ENCODE measurements at regions of chr6 and their contacts with region 1.

Region 1: DNA sequence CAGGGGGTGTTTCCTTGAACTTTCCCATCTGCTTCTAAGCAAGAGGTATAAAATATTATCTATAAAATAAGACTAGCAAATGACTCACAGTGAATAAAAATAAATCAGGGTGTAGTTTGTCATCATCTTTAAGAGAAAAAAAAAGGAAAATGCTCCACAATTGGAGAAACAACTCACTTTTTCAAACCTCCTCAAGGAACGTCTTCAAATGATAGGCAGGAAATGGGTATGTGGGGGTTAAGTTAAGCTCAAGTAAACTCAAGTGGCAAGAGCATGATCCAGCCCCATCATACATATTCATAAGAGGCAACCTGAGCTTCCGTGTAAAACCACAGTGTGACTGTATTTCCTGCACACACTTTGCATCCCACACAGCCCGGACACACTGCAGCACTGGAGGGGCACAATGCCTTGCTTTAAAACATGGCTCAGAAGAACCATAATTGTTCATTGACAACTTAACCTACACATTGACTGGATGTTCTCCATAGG is 58.5 kb upstream of the CEP85L start:
- DNase-seq: peak; percentile 41 to 94 (median 61)
- ATAC-seq: peak; percentile 90
- H3K4me3 ChIP-seq: peak overlapping the region; percentile 83
- H3K4me3 Mint-ChIP-seq: peak overlapping the region; percentile 98
- H3K27ac ChIP-seq: peak overlapping the region; percentile 73 to 78
- H3K27ac Mint-ChIP-seq: peak overlapping the region; percentile 97
- H3K4me1 ChIP-seq: peaks cover 53% of the 10 kb centered on the region
- H3K4me1 Mint-ChIP-seq: peaks cover 82% of the 10 kb centered on the region
- H3K27me3 ChIP-seq: no peaks in the 10 kb centered on the region
- H3K27me3 Mint-ChIP-seq: no peaks in the 10 kb centered on the region
- CTCF ChIP-seq: no peak

Region 2: DNA sequence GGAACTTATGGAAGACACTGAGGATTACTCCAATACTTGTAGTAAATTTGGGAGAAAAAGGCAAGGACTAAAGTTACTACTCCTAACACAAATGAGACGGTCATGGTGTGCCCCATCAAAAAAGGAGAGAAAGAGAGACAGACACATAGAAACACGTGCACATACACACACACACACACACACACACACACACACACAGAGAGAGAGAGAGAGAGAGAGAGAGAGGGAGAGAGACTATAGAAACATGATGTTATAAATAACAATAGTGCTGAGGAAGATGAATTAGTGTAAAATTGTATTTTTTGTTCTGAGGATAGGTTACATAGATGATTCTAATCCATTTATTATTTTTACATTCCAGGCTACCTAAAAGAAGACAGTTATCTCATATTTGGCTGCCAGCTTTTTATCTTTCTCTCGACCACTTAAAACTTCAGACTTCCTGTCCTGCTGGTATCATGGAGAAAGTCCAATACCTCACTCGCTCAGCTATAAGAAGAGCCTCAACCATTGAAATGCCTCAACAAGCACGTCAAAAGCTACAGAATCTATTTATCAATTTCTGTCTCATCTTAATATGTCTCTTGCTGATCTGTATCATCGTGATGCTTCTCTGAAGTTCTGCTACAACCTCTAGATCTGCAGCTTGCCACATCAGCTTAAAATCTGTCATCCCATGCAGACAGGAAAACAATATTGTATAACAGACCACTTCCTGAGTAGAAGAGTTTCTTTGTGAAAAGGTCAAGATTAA is 151.3 kb before region 1 on chr6:
- CTCF ChIA-PET with region 1: no interaction called
- POLR2A ChIA-PET with region 1: interaction called, 20 read pairs
- intact Hi-C with region 1: no loop called
- DNase-seq: peak in 7 of 14 experiments; percentile 6 to 86 (median 53)
- ATAC-seq: peak; percentile 93
- H3K4me3 ChIP-seq: peak overlapping the region; percentile 25
- H3K4me3 Mint-ChIP-seq: peak overlapping the region; percentile 74
- H3K27ac ChIP-seq: peak overlapping the region; percentile 59 to 78
- H3K27ac Mint-ChIP-seq: peak overlapping the region; percentile 89
- H3K4me1 ChIP-seq: peaks cover 13% of the 10 kb centered on the region
- H3K4me1 Mint-ChIP-seq: peaks cover 43% of the 10 kb centered on the region
- H3K27me3 ChIP-seq: no peaks in the 10 kb centered on the region
- H3K27me3 Mint-ChIP-seq: no peaks in the 10 kb centered on the region
- CTCF ChIP-seq: no peak

Region 3: GRCh38 chr6:118651282-118652050 is 58.4 kb before region 1 on chr6 and contains the start of gene CEP85L:
- CTCF ChIA-PET with region 1: interaction called, 7 read pairs
- POLR2A ChIA-PET with region 1: interaction called, 64 read pairs
- intact Hi-C with region 1: loop called (anchors 1 to 2 kb)
- DNase-seq: peak; percentile 83 to 96 (median 90)
- ATAC-seq: peak; percentile 90
- H3K4me3 ChIP-seq: peak within 1 kb of the TSS; percentile 82
- H3K4me3 Mint-ChIP-seq: peak within 1 kb of the TSS; percentile 91
- H3K27ac ChIP-seq: peak within 1 kb of the TSS; percentile 78 to 87
- H3K27ac Mint-ChIP-seq: peak within 1 kb of the TSS; percentile 91
- H3K4me1 ChIP-seq: peaks cover 35% of the 10 kb centered on the region
- H3K4me1 Mint-ChIP-seq: peaks cover 59% of the 10 kb centered on the region
- H3K27me3 ChIP-seq: no peaks in the 10 kb centered on the region
- H3K27me3 Mint-ChIP-seq: no peaks in the 10 kb centered on the region
- CTCF ChIP-seq: no peak
- total RNA-seq, gene CEP85L: 76.2 to 80.7 TPM

Region 4: DNA sequence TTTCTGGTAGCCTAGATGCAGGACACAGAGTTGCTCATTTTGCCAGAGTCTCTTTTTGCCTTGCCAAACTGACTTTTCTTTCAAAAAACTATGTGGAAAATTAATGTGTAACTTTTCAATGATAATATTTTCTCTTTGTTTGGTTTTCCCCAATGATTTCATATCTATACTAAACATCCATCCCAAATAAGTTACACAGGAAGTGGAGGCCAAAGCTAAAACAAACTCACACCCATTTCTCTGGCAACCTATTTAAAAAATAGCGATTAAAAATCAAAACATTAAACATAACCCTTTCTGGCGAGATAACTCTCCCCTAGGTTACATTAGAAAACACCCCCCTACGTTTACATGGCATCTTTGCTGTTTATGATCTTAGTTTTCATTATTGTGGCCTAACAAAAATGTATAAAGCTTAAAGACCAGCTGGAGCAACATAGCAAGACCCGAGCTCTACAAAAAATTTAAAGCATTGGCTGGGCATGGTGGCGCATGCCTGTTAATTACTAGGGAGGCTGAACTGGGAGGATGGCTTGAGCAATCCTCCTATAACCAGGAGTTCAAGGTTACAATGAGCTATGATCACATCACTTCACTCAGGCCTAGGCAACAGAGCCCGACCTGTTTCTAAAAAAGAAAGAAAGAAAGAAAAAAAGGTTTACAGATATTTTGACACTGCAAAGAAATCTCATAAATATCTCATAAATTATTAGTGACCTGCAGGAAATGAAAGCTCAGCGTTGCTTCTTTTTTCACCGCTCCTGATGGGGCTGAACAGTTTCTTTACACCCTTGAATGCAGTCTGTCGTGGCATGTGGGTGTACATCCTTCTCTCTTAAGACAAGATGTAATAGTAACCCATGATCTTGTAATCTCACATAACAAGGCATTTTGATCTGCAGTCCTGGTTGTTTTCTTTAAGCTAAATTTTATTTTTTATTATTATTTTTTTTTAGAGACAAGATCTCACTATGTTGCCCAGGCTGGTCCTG is 25.7 kb before region 1 on chr6:
- CTCF ChIA-PET with region 1: no interaction called
- POLR2A ChIA-PET with region 1: interaction called, 24 read pairs
- intact Hi-C with region 1: no loop called
- DNase-seq: no peak
- ATAC-seq: peak; percentile 29
- H3K4me3 ChIP-seq: no peak overlapping the region
- H3K4me3 Mint-ChIP-seq: peak overlapping the region; percentile 25
- H3K27ac ChIP-seq: no peak overlapping the region
- H3K27ac Mint-ChIP-seq: peak overlapping the region; percentile 60
- H3K4me1 ChIP-seq: peaks cover 28% of the 10 kb centered on the region
- H3K4me1 Mint-ChIP-seq: peaks cover 79% of the 10 kb centered on the region
- H3K27me3 ChIP-seq: no peaks in the 10 kb centered on the region
- H3K27me3 Mint-ChIP-seq: no peaks in the 10 kb centered on the region
- CTCF ChIP-seq: no peak

Region 5: GRCh38 chr6:118744261-118744941 is 34.5 kb after region 1 on chr6:
- CTCF ChIA-PET with region 1: no interaction called
- POLR2A ChIA-PET with region 1: interaction called, 5 read pairs
- intact Hi-C with region 1: loop called in 1 of 2 experiments (anchors 5 kb)
- DNase-seq: no peak
- ATAC-seq: no peak
- H3K4me3 ChIP-seq: no peak overlapping the region
- H3K4me3 Mint-ChIP-seq: no peak overlapping the region
- H3K27ac ChIP-seq: no peak overlapping the region
- H3K27ac Mint-ChIP-seq: no peak overlapping the region
- H3K4me1 ChIP-seq: peaks cover 10% of the 10 kb centered on the region
- H3K4me1 Mint-ChIP-seq: peaks cover 23% of the 10 kb centered on the region
- H3K27me3 ChIP-seq: no peaks in the 10 kb centered on the region
- H3K27me3 Mint-ChIP-seq: no peaks in the 10 kb centered on the region
- CTCF ChIP-seq: no peak

Region 6: DNA sequence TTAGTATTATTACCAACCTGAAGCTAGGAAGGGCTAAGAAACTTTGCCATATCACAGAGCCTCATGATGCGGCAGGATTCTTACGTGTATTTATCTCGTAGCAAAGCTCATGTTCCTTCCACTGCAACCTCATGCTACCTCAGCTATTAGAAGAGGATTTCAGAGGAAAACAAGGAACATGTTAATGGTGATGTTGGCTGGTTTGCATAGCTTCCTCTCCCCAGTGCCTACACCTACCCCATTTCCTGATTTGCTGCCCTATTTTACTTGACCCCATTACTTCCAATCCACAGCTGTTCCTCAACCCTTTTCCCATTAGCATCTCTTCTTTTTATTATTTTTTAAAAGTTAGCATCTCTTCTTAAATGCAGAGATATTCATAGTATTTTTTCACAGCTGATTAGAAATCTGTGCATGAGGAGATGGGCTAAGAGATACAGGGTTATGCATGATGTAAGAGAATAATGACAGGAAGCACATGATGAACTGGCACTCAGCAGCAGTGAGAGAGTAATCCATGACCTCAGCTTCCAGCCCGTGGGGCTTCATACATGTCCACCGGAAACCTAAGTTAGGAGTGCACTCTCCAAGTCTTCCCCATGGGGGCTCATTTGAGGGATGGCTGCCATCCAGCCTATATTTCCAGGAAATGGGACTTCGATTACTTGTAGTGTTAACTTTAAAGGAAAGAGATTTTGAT is 78.0 kb after region 1 on chr6:
- CTCF ChIA-PET with region 1: no interaction called
- POLR2A ChIA-PET with region 1: interaction called, 14 read pairs
- intact Hi-C with region 1: no loop called
- DNase-seq: peak in 5 of 14 experiments; percentile 10 to 74 (median 54)
- ATAC-seq: peak; percentile 92
- H3K4me3 ChIP-seq: no peak overlapping the region
- H3K4me3 Mint-ChIP-seq: peak overlapping the region; percentile 5
- H3K27ac ChIP-seq: peak overlapping the region in 1 of 2 donors; percentile 31
- H3K27ac Mint-ChIP-seq: peak overlapping the region; percentile 79
- H3K4me1 ChIP-seq: peaks cover 24% of the 10 kb centered on the region
- H3K4me1 Mint-ChIP-seq: peaks cover 16% of the 10 kb centered on the region
- H3K27me3 ChIP-seq: no peaks in the 10 kb centered on the region
- H3K27me3 Mint-ChIP-seq: no peaks in the 10 kb centered on the region
- CTCF ChIP-seq: no peak

Region 7: DNA sequence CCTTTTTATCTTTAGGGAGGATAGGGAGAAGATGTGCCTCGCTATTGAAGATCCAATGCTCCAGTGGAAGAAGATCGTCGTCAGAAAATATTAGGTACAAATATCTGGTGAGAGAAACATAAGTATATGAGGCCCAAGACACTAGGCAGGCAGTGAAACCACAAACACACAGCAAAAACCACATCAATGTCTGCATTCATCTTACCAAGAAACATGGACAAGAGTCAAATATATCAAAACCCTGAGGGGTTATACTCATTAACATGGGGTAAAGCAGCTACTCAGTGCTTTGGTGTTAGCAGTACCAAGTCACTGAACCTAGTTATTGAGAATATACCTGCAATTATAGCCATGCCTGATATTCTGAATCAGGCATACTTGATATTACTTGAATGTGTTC is 469.9 kb after region 1 on chr6:
- CTCF ChIA-PET with region 1: no interaction called
- POLR2A ChIA-PET with region 1: no interaction called
- intact Hi-C with region 1: no loop called
- DNase-seq: peak in 3 of 14 experiments; percentile 12 to 21 (median 15)
- ATAC-seq: no peak
- H3K4me3 ChIP-seq: no peak overlapping the region
- H3K4me3 Mint-ChIP-seq: no peak overlapping the region
- H3K27ac ChIP-seq: no peak overlapping the region
- H3K27ac Mint-ChIP-seq: no peak overlapping the region
- H3K4me1 ChIP-seq: peaks cover 6% of the 10 kb centered on the region
- H3K4me1 Mint-ChIP-seq: peaks cover 21% of the 10 kb centered on the region
- H3K27me3 ChIP-seq: no peaks in the 10 kb centered on the region
- H3K27me3 Mint-ChIP-seq: no peaks in the 10 kb centered on the region
- CTCF ChIP-seq: no peak